Activated CD4-positive, alpha-beta memory T cell treated with anti-CD3 and anti-CD28 coated beads for 36 hours (primary cell): ENCODE measurements at regions of chr15 and their contacts with region 1.

Region 1: DNA sequence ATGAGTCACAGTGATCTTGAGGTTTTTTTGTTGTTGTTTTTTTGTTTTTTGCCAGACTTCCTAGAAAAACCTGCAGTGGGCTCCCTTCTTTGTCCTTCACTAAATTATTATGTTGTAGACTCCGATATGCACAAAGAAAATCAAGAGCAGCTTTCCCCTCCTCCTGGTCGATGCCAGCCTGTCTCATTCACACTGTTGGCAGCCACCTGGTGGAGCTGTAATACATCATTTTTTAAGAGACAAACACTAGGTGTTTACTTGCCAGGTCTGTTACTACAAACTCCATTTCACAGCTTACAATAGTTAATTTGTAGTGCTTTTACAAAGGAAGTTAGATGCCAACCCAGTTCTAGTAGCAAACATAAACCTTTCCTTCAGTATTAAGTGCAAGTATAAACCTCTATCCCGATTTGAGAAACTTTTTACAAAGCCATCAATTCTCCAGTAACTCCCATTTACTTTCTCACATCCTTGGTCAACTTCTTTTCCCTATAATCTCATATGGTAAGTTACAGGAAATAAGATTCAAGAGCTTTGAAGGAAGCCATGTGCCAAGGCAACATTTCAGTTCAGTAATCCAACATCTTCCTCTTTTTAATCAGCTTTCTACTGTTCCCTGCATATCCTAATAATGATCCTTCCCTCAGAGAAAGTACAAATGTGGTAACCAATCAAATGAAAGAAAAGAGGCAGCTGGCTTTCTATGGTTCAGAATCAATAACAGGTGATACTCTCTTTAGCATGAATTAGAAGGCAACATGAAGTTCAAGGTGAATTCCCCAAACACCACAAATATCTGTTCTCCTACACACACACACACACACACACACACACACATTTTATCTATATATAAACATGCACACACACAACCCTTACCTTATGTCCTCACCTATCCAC is 14.0 kb downstream of the AAGAB start:
- DNase-seq: peak; percentile 40
- H3K4me3 Mint-ChIP-seq: peak overlapping the region; percentile 58
- H3K27ac Mint-ChIP-seq: peak overlapping the region; percentile 92
- H3K4me1 Mint-ChIP-seq: peaks cover 48% of the 10 kb centered on the region
- H3K27me3 Mint-ChIP-seq: no peaks in the 10 kb centered on the region

Region 2: DNA sequence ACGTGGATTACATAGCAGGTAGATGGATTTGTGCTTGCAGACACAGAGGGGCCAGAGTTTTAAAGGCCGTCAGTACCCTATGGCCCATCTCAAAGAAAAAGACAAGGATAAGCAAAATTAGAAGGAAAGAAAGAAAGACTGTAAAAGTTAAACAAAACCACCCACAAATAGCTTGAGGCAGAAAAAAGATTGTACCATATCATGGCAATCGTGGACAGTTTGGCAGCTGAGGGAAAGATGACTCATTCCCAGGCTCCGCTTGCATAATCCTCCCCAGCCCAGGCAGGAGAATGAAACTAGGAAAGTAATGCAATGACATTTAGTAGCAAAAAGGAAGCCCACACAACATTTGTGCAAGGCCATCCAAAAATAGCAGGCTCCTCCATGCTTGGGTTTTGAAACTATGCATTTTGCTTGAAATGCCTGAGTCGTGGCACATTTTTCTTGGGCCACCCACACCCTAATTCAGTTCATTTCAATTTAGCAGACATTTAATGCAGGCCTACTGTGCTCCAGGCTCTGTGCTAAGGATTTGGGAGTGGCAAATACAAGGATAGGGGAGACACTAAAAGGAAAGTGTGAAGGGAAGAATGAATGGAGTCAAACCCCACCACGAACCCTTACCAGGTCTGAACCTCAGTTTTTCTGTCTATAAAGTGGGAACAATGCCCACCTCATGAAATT is 216.0 kb before region 1 on chr15:
- CTCF ChIA-PET with region 1: no interaction called
- POLR2A ChIA-PET with region 1: no interaction called
- intact Hi-C with region 1: loop called (anchors 1 kb)
- DNase-seq: peak; percentile 78
- H3K4me3 Mint-ChIP-seq: no peak overlapping the region
- H3K27ac Mint-ChIP-seq: no peak overlapping the region
- H3K4me1 Mint-ChIP-seq: peaks cover 33% of the 10 kb centered on the region
- H3K27me3 Mint-ChIP-seq: peaks cover 1% of the 10 kb centered on the region

Region 3: GRCh38 chr15:67085818-67086636 is 154.5 kb before region 1 on chr15:
- CTCF ChIA-PET with region 1: interaction called, 5 read pairs
- POLR2A ChIA-PET with region 1: interaction called, 3 read pairs
- intact Hi-C with region 1: loop called (anchors 1 kb)
- DNase-seq: peak; percentile 70
- H3K4me3 Mint-ChIP-seq: peak overlapping the region; percentile 1
- H3K27ac Mint-ChIP-seq: peak overlapping the region; percentile 82
- H3K4me1 Mint-ChIP-seq: peaks cover 98% of the 10 kb centered on the region
- H3K27me3 Mint-ChIP-seq: no peaks in the 10 kb centered on the region

Region 4: DNA sequence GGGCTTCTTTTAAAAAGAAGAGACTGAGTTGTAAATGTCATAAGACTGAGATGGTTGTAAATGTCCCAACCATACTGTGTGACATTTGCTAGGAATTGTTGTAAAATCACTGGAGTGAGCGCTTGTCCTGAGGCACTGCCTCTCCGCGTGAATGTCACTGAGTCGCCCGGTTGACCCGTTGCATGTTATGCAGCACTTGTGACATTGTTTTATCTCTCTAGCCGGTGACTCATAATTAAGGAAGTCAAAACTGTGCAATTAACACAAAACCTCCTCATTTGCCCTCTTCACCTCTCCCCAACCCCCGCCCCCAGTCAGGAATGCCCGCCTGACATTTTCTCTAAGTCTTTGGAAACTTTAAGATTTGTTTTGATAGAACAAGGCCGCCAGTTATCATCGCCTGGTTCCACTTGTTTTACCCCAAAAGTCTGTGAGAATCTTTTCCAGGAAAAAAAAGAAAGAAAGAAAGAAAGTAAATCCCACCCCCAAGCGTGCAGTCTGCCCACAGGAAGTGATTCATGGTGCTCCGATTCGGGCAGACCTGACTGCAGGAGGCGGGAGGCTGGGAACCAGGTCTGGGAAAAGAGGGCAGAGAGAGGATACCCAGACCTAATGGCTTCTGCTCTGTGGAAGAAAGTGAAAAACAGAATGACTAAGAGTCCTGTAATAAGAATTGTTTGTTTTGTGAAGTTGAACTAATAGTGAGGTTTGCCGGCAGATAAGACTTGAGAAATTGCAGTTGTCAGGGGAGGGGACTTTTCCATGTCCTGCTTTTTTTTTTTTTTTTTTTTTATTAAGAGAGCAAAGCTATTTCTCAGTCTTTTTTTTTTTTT is 90.2 kb before region 1 on chr15:
- CTCF ChIA-PET with region 1: interaction called, 3 read pairs
- POLR2A ChIA-PET with region 1: interaction called, 3 read pairs
- intact Hi-C with region 1: loop called (anchors 1 kb)
- DNase-seq: peak; percentile 76
- H3K4me3 Mint-ChIP-seq: peak overlapping the region; percentile 62
- H3K27ac Mint-ChIP-seq: peak overlapping the region; percentile 85
- H3K4me1 Mint-ChIP-seq: peaks cover 73% of the 10 kb centered on the region
- H3K27me3 Mint-ChIP-seq: no peaks in the 10 kb centered on the region

Region 5: DNA sequence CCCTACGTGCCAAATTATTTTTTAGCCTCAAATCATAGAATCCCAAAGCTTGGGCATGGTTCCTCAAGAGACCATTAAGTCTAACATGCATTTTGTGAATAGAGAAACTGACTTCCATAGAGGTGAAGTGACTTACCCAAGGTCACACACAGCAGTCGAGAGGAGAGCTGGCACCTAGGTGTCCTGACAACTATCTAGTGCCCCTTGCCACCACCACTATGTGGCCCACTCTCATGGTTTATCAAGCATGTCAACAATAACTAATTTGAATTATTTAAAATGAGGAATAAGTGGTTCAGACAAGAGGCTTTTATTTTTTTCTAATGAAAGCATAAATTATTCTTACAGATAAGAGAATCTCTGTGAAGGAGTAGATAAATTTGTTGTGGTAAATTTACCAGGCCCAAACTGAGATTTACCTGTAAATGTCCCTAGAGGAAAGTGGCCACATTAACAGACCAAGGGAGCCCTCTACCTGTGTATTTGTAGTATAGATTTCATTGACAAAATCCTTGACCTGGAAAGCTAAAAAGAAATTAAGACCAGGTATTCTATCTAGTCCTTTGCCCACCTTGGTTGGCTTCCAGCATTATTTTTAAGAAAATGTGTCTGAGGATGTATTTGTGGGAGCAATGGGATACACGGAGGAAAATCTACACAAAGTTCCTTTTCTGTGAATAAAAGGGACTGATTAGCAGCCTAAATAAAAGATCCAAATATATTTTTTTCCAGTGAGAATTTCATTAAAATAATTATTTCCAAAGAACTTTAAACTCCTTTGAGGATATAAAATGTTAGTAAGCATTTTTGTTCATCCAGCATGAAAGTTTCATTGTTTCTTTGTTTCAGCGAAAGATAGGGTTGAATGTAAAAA is 63.2 kb after region 1 on chr15:
- CTCF ChIA-PET with region 1: interaction called, 22 read pairs
- POLR2A ChIA-PET with region 1: interaction called, 5 read pairs
- intact Hi-C with region 1: loop called (anchors 1 kb)
- DNase-seq: no peak
- H3K4me3 Mint-ChIP-seq: no peak overlapping the region
- H3K27ac Mint-ChIP-seq: no peak overlapping the region
- H3K4me1 Mint-ChIP-seq: peaks cover 14% of the 10 kb centered on the region
- H3K27me3 Mint-ChIP-seq: peaks cover 6% of the 10 kb centered on the region

Region 6: GRCh38 chr15:67331676-67332075 is 91.2 kb after region 1 on chr15:
- CTCF ChIA-PET with region 1: no interaction called
- POLR2A ChIA-PET with region 1: no interaction called
- intact Hi-C with region 1: no loop called
- DNase-seq: no peak
- H3K4me3 Mint-ChIP-seq: no peak overlapping the region
- H3K27ac Mint-ChIP-seq: no peak overlapping the region
- H3K4me1 Mint-ChIP-seq: no peaks in the 10 kb centered on the region
- H3K27me3 Mint-ChIP-seq: peaks cover 4% of the 10 kb centered on the region

Region 7: DNA sequence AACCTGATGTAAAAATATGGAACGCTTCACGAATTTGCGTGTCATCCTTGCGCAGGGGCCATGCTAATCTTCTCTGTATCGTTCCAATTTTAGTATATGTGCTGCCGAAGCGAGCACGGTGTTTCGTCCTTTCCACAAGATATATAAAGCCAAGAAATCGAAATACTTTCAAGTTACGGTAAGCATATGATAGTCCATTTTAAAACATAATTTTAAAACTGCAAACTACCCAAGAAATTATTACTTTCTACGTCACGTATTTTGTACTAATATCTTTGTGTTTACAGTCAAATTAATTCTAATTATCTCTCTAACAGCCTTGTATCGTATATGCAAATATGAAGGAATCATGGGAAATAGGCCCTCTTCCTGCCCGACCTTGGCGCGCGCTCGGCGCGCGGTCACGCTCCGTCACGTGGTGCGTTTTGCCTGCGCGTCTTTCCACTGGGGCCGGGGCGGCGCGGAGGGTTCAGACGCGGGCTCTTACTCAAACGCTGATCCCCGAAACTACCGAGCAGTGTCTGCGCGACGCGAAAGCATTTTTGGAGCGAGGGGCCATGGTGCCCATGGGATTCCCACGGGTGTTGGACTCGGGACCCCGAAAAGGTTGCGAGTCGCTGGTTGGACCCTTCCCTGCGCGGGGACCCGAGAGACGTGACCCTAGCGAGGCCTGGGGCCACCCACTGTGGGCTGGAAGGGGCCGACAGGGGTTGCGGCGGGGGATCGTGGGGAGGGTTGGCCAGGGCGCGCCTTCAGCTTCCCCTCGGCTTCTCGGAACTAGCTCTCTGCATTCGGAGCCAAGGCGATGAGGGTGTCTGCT is 599.7 kb after region 1 on chr15 and contains the start of gene RNU6-1:
- CTCF ChIA-PET with region 1: no interaction called
- POLR2A ChIA-PET with region 1: no interaction called
- intact Hi-C with region 1: loop called (anchors 5 kb)
- DNase-seq: peak; percentile 96
- H3K4me3 Mint-ChIP-seq: peak within 1 kb of the TSS; percentile 88
- H3K27ac Mint-ChIP-seq: peak within 1 kb of the TSS; percentile 95
- H3K4me1 Mint-ChIP-seq: peaks cover 37% of the 10 kb centered on the region
- H3K27me3 Mint-ChIP-seq: peaks cover 18% of the 10 kb centered on the region
- total RNA-seq, gene RNU6-1: not detected